Breast epithelium (tissue), 4 donors: ENCODE measurements at regions of chr5 and their contacts with region 1.

Region 1: DNA sequence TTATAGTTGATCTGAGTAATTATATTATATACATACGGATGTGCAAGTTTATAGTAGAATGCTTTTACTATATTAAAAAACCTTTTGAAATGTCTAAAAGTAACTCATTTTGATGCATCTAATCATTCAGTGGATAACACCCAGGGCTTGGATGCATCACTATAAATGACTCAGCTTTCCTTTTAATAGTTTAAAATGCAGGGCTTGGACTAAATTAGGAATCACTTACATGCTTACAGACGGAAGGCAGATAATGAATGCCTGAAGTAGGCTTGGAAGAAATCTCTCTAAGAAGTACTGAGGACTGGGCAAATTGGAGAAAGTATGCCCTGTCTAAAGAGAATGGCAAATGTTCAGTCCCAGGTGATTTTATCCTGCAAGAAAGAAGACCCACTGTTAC is 362.5 kb upstream of the CCNH start:
- DNase-seq: no peak
- H3K4me3 ChIP-seq: no peak overlapping the region
- H3K27ac ChIP-seq: no peak overlapping the region
- H3K4me1 ChIP-seq: no peaks in the 10 kb centered on the region
- H3K27me3 ChIP-seq: peaks cover 0 to 4% of the 10 kb centered on the region in 2 donors
- CTCF ChIP-seq: no peak
- POLR2A ChIP-seq: no peak

Region 2: GRCh38 chr5:89179731-89180130 is 1404.5 kb after region 1 on chr5:
- intact Hi-C with region 1: loop called (anchors 5 kb)
- DNase-seq: no peak
- H3K4me3 ChIP-seq: no peak overlapping the region
- H3K27ac ChIP-seq: no peak overlapping the region
- H3K4me1 ChIP-seq: no peaks in the 10 kb centered on the region
- H3K27me3 ChIP-seq: no peaks in the 10 kb centered on the region
- CTCF ChIP-seq: no peak
- POLR2A ChIP-seq: no peak